CD8-positive, alpha-beta T cell (primary cell): ENCODE measurements at regions of chr14 and their contacts with region 1.

Region 1: DNA sequence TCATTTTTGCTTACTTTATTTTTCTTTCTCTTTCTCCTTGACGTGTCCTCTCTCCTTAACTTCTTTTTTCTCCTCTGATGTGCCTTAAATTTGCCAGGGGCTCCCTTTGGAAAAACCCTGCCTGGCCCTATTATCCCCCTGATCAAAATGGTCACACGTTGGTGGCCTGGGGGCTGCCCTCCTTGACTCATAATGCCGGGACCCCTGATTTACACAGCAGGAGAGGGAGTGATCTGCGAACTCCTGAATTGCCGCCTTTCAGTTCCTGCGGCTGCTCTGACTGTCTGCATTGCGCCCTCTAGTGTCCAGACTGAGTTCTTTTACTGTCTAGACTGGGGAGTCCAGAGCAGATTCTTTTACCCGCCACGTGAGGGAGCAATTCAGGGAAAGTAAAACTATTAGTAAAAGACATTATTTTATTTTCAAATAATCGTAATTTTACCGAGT is 44.8 kb upstream of the GZMB start:
- DNase-seq: peak; percentile 49 to 94 (median 78)
- ATAC-seq: peak; percentile 82
- H3K4me3 ChIP-seq: peak overlapping the region; percentile 34 to 57
- H3K4me3 Mint-ChIP-seq: peak overlapping the region; percentile 84
- H3K27ac ChIP-seq: peak overlapping the region in 1 of 2 experiments; percentile 78
- H3K27ac Mint-ChIP-seq: peak overlapping the region; percentile 78
- H3K4me1 ChIP-seq: peaks cover 22% of the 10 kb centered on the region
- H3K4me1 Mint-ChIP-seq: peaks cover 60% of the 10 kb centered on the region
- H3K27me3 ChIP-seq: no peaks in the 10 kb centered on the region
- H3K27me3 Mint-ChIP-seq: no peaks in the 10 kb centered on the region
- CTCF ChIP-seq: peak; percentile 99

Region 2: DNA sequence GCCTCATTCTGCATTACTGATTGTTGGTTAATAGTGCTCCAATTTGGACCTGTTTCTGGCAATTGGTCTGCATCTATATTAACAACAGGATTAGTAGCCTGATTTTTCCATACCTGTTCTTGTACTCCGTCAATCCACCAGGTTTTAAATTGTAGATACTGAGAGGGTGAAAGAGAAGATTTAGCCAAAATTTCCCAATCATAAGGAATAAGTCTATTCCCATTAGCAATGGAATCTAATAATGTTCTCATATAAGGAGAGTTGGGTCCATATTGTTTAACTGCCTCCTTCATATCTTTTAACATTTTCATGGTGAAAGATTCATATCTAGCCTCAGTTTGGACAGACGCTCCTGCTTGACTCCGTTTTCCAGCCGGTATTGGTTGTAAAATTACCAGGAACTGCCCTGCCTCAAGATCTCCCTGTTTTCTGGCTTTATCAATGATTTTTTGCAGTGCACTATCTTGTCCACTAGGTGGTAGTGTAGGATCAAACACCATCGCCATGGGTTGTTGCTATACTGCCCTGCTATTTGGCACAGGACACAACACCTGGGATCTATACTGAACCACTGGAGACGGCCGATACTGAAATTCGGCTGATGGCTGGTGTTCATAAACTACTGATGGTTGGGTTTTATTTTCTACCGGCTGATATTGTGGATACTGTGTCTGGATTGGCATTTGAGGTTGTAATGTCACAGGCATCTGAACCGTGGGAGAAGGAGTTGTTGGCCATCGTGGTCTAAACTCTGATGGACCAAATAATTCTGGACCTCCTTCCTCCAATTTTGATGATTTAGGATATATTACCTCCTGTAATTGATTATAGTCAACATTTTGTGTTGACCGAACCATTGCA is 664.9 kb before region 1 on chr14:
- CTCF ChIA-PET with region 1: no interaction called
- POLR2A ChIA-PET with region 1: no interaction called
- intact Hi-C with region 1: loop called in 1 of 2 experiments (anchors 5 kb)
- DNase-seq: peak in 8 of 9 experiments; percentile 14 to 84 (median 50)
- ATAC-seq: peak; percentile 99
- H3K4me3 ChIP-seq: no peak overlapping the region
- H3K4me3 Mint-ChIP-seq: no peak overlapping the region
- H3K27ac ChIP-seq: no peak overlapping the region
- H3K27ac Mint-ChIP-seq: no peak overlapping the region
- H3K4me1 ChIP-seq: peaks cover 7% of the 10 kb centered on the region
- H3K4me1 Mint-ChIP-seq: peaks cover 25% of the 10 kb centered on the region
- H3K27me3 ChIP-seq: no peaks in the 10 kb centered on the region
- H3K27me3 Mint-ChIP-seq: no peaks in the 10 kb centered on the region
- CTCF ChIP-seq: peak; percentile 93

Region 3: GRCh38 chr14:24442273-24443052 is 236.4 kb before region 1 on chr14 and contains the start of gene SDR39U1:
- CTCF ChIA-PET with region 1: no interaction called
- POLR2A ChIA-PET with region 1: no interaction called
- intact Hi-C with region 1: loop called (anchors 2 to 10 kb)
- DNase-seq: peak; percentile 93 to 100 (median 95)
- ATAC-seq: peak; percentile 89
- H3K4me3 ChIP-seq: peak within 1 kb of the TSS; percentile 77 to 89
- H3K4me3 Mint-ChIP-seq: peak within 1 kb of the TSS; percentile 95
- H3K27ac ChIP-seq: peak within 1 kb of the TSS; percentile 96
- H3K27ac Mint-ChIP-seq: peak within 1 kb of the TSS; percentile 97
- H3K4me1 ChIP-seq: peaks cover 35% of the 10 kb centered on the region
- H3K4me1 Mint-ChIP-seq: peaks cover 45% of the 10 kb centered on the region
- H3K27me3 ChIP-seq: no peaks in the 10 kb centered on the region
- H3K27me3 Mint-ChIP-seq: no peaks in the 10 kb centered on the region
- CTCF ChIP-seq: no peak
- total RNA-seq, gene SDR39U1: 75.0 to 84.4 TPM

Region 4: GRCh38 chr14:24513009-24513408 is 165.8 kb before region 1 on chr14:
- CTCF ChIA-PET with region 1: no interaction called
- POLR2A ChIA-PET with region 1: no interaction called
- intact Hi-C with region 1: no loop called
- DNase-seq: no peak
- ATAC-seq: no peak
- H3K4me3 ChIP-seq: no peak overlapping the region
- H3K4me3 Mint-ChIP-seq: no peak overlapping the region
- H3K27ac ChIP-seq: no peak overlapping the region
- H3K27ac Mint-ChIP-seq: no peak overlapping the region
- H3K4me1 ChIP-seq: no peaks in the 10 kb centered on the region
- H3K4me1 Mint-ChIP-seq: no peaks in the 10 kb centered on the region
- H3K27me3 ChIP-seq: no peaks in the 10 kb centered on the region
- H3K27me3 Mint-ChIP-seq: peaks cover 23% of the 10 kb centered on the region
- CTCF ChIP-seq: no peak

Region 5: DNA sequence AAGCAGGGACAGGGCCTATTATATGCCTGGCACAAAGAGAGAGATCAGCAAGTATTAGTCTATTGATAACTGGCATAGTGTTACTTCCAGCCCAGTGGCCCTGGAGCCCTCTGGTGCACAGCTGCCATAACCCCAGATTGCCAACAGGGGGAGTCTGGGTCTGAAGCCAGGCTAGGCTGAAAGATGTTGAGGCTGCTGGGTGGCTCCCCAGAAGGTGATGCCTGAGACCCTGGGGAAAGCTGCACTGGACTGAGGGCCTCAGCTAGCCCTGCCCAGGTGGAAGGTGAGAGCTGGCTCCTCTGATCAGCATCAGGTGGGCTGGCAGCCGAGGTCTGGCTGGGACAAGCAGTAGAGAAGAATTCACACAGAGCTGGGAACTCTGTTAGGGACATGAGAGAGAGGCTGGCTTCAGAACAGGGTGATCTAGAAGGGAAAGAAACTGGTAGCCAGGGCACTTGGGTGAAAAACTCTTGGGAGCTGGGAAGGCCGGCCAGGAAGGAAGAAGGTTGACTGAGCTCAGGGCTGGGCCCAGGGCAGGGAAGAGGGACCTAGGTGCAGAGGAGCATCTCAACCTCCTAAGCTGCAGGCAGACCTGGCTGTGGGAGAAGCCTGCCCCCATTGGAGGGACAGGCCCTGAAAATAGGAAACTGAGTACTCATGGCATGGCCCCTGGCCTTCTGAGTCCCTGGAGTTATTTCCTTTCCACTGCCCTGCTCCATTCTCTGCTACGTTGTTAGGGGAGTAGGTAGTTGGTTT is 73.2 kb before region 1 on chr14:
- CTCF ChIA-PET with region 1: interaction called, 22 read pairs
- POLR2A ChIA-PET with region 1: interaction called, 3 read pairs
- intact Hi-C with region 1: loop called (anchors 1 kb)
- DNase-seq: peak; percentile 41 to 77 (median 64)
- ATAC-seq: peak; percentile 79
- H3K4me3 ChIP-seq: peak overlapping the region in 1 of 2 experiments; percentile 19
- H3K4me3 Mint-ChIP-seq: no peak overlapping the region
- H3K27ac ChIP-seq: peak overlapping the region in 1 of 2 experiments; percentile 71
- H3K27ac Mint-ChIP-seq: peak overlapping the region; percentile 88
- H3K4me1 ChIP-seq: peaks cover 5% of the 10 kb centered on the region
- H3K4me1 Mint-ChIP-seq: peaks cover 35% of the 10 kb centered on the region
- H3K27me3 ChIP-seq: no peaks in the 10 kb centered on the region
- H3K27me3 Mint-ChIP-seq: peaks cover 7% of the 10 kb centered on the region
- CTCF ChIP-seq: peak; percentile 87

Region 6: GRCh38 chr14:24634158-24634557 is 44.7 kb before region 1 on chr14 and contains the start of gene GZMB:
- CTCF ChIA-PET with region 1: interaction called, 3 read pairs
- POLR2A ChIA-PET with region 1: no interaction called
- intact Hi-C with region 1: loop called (anchors 1 to 2 kb)
- DNase-seq: peak; percentile 32 to 95 (median 60)
- ATAC-seq: peak; percentile 88
- H3K4me3 ChIP-seq: peak within 1 kb of the TSS; percentile 28 to 63
- H3K4me3 Mint-ChIP-seq: peak within 1 kb of the TSS; percentile 12
- H3K27ac ChIP-seq: peak within 1 kb of the TSS; percentile 63 to 93
- H3K27ac Mint-ChIP-seq: peak within 1 kb of the TSS; percentile 32
- H3K4me1 ChIP-seq: no peaks in the 10 kb centered on the region
- H3K4me1 Mint-ChIP-seq: peaks cover 7% of the 10 kb centered on the region
- H3K27me3 ChIP-seq: no peaks in the 10 kb centered on the region
- H3K27me3 Mint-ChIP-seq: no peaks in the 10 kb centered on the region
- CTCF ChIP-seq: no peak
- total RNA-seq, gene GZMB: 5.4 to 5.8 TPM

Region 7: DNA sequence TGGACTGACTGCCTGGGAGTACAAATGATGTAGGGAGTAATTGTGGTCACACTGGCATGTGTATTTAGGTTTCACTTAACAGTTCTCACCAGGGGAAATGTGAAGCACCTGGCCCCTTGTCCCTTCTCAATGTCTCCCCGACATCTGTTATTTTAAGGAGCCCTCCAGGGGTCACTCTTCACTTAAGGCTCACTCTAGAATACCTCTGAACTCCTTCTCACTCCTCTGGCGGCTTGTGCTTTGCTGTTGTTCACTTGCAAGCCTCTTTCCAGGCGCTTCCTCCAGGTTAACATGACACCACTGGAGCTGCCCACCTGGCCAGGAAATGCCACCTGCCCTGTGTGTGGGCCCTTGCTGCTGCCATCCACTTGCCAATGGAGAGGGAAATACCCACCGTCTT is 11.7 kb after region 1 on chr14:
- CTCF ChIA-PET with region 1: interaction called, 21 read pairs
- POLR2A ChIA-PET with region 1: interaction called, 9 read pairs
- intact Hi-C with region 1: loop called in 1 of 2 experiments (anchors 2 kb)
- DNase-seq: peak in 2 of 9 experiments; percentile 51 to 66
- ATAC-seq: no peak
- H3K4me3 ChIP-seq: no peak overlapping the region
- H3K4me3 Mint-ChIP-seq: no peak overlapping the region
- H3K27ac ChIP-seq: peak overlapping the region in 1 of 2 experiments; percentile 1
- H3K27ac Mint-ChIP-seq: no peak overlapping the region
- H3K4me1 ChIP-seq: peaks cover 44% of the 10 kb centered on the region
- H3K4me1 Mint-ChIP-seq: peaks cover 24% of the 10 kb centered on the region
- H3K27me3 ChIP-seq: no peaks in the 10 kb centered on the region
- H3K27me3 Mint-ChIP-seq: no peaks in the 10 kb centered on the region
- CTCF ChIP-seq: no peak

Region 8: GRCh38 chr14:24710403-24711112 is 31.7 kb after region 1 on chr14:
- CTCF ChIA-PET with region 1: interaction called, 11 read pairs
- POLR2A ChIA-PET with region 1: no interaction called
- intact Hi-C with region 1: no loop called
- DNase-seq: peak; percentile 29 to 77 (median 52)
- ATAC-seq: peak; percentile 55
- H3K4me3 ChIP-seq: no peak overlapping the region
- H3K4me3 Mint-ChIP-seq: no peak overlapping the region
- H3K27ac ChIP-seq: no peak overlapping the region
- H3K27ac Mint-ChIP-seq: no peak overlapping the region
- H3K4me1 ChIP-seq: no peaks in the 10 kb centered on the region
- H3K4me1 Mint-ChIP-seq: no peaks in the 10 kb centered on the region
- H3K27me3 ChIP-seq: no peaks in the 10 kb centered on the region
- H3K27me3 Mint-ChIP-seq: peaks cover 2% of the 10 kb centered on the region
- CTCF ChIP-seq: peak; percentile 88